ENCODE measurements at regions of chr11 and their contacts with region 1.

Region 1: DNA sequence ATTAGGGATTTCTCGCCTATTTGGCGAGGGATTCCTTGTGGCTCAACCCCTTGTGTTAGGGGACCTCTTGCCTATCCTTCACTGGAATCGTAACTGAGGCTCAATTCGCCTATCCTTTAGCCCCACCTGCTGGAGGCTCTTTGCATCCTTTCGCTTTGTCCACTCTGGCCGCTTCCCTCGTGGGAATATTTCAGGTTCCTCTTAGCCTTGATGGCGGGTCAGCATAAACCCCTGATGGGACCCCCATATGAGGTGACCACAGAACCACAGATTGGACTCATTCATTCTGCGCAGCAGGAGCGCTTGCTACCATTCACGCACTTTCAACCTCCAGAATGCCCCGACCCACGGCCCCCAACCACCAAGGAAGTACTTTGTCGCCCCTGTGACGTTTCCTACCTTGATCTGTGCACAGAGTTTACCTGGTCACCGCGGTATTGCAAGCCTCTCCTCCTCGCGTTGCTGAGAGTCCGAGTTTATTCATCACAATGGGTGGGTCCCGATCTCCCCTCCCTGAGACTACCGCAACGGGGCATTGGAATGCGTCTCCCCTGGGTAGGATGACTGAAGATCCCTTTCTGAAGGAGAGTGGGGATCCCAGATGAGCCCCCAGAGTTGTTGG is at the start of gene OR52N2:
- H3K4me3 Mint-ChIP-seq: peak within 1 kb of the TSS; percentile 73
- H3K27ac Mint-ChIP-seq: peak within 1 kb of the TSS; percentile 22
- H3K4me1 Mint-ChIP-seq: peaks cover 12% of the 10 kb centered on the region
- H3K27me3 Mint-ChIP-seq: no peaks in the 10 kb centered on the region

Region 2: GRCh38 chr11:4636962-4637661 is 1171.5 kb before region 1 on chr11 and contains the start of gene OR51D1:
- intact Hi-C with region 1: loop called (anchors 10 kb)
- H3K4me3 Mint-ChIP-seq: no peak within 1 kb of the TSS
- H3K27ac Mint-ChIP-seq: no peak within 1 kb of the TSS
- H3K4me1 Mint-ChIP-seq: no peaks in the 10 kb centered on the region
- H3K27me3 Mint-ChIP-seq: peaks cover 3% of the 10 kb centered on the region

Region 3: GRCh38 chr11:5123802-5124521 is 684.6 kb before region 1 on chr11:
- intact Hi-C with region 1: loop called (anchors 10 kb)
- H3K4me3 Mint-ChIP-seq: no peak overlapping the region
- H3K27ac Mint-ChIP-seq: no peak overlapping the region
- H3K4me1 Mint-ChIP-seq: no peaks in the 10 kb centered on the region
- H3K27me3 Mint-ChIP-seq: no peaks in the 10 kb centered on the region

Region 4: GRCh38 chr11:5204787-5205186 is 603.8 kb before region 1 on chr11:
- intact Hi-C with region 1: loop called (anchors 10 kb)
- H3K4me3 Mint-ChIP-seq: no peak overlapping the region
- H3K27ac Mint-ChIP-seq: no peak overlapping the region
- H3K4me1 Mint-ChIP-seq: no peaks in the 10 kb centered on the region
- H3K27me3 Mint-ChIP-seq: no peaks in the 10 kb centered on the region

Region 5: GRCh38 chr11:5476184-5476819 is 332.3 kb before region 1 on chr11:
- intact Hi-C with region 1: loop called (anchors 1 kb)
- H3K4me3 Mint-ChIP-seq: no peak overlapping the region
- H3K27ac Mint-ChIP-seq: no peak overlapping the region
- H3K4me1 Mint-ChIP-seq: no peaks in the 10 kb centered on the region
- H3K27me3 Mint-ChIP-seq: peaks cover 1% of the 10 kb centered on the region

Region 6: DNA sequence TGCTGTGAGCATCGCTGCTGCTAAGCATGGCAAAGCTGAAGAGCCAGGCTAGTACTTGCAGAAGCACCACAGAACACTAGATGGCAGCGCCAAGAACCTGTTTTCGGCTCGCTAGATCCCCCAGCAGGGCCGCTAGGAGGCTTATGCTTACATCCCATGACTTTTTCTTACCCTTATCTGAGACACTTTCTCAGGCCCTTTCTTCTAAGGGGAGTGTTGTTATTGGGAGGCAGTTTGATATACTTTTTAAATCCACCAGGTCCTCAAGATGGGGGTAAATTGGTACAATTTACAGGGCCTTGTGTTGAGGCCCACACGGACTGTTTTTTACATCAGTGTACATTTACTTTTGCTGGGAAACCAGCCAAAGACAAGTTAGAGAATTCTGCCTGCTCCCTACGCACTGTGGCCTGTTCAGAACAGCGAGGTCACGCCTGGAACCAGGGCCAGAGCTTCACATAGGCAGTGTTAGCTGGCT is 208.2 kb before region 1 on chr11:
- intact Hi-C with region 1: loop called (anchors 1 kb)
- H3K4me3 Mint-ChIP-seq: no peak overlapping the region
- H3K27ac Mint-ChIP-seq: no peak overlapping the region
- H3K4me1 Mint-ChIP-seq: peaks cover 14% of the 10 kb centered on the region
- H3K27me3 Mint-ChIP-seq: peaks cover 2% of the 10 kb centered on the region

Region 7: DNA sequence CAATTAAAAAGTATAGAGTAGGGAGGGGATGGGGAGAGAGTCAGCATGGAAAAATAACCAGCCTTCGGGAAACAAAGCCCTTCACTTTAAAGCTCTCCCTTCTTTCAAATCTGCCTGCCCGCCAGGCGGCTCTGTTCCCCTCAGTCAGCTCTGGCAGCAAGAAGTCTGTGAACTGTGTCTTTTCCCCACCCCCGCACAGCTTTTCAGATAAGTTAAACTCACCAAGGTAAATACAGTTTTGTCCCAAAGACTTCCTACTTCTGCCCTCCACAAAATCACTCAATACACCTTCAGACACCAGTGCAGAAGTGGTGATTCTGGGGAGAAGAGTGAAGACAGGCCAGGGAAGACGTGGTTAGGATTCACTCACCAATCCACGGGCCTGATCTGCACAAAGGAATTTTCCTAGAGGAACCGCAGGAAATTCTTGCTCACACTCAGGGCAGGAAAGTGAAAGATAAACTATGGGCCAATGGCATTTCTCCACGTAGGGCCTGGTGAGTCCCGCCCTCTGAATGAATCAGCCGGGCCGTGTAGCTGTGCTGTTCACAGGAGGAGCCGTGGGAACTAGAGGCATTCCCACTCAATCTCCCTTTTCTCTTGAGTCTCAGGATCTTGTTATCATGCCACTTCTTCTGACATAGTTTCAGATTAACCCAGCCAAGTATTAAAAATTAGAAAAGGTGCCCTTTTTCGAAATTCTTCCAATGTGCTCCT is 123.8 kb before region 1 on chr11 and contains the start of gene TRIM5:
- intact Hi-C with region 1: loop called (anchors 5 kb)
- H3K4me3 Mint-ChIP-seq: peak within 1 kb of the TSS; percentile 91
- H3K27ac Mint-ChIP-seq: peak within 1 kb of the TSS; percentile 92
- H3K4me1 Mint-ChIP-seq: peaks cover 42% of the 10 kb centered on the region
- H3K27me3 Mint-ChIP-seq: no peaks in the 10 kb centered on the region

Measured in dendritic cell treated with granulocyte-macrophage colony-stimulating factor and Interleukin-4, amounts not matched to agents 40 ng/mL and 50 ng/mL, for 4 days (primary cell).